ENCODE measurements at regions of chr1 and their contacts with region 1.

Region 1: DNA sequence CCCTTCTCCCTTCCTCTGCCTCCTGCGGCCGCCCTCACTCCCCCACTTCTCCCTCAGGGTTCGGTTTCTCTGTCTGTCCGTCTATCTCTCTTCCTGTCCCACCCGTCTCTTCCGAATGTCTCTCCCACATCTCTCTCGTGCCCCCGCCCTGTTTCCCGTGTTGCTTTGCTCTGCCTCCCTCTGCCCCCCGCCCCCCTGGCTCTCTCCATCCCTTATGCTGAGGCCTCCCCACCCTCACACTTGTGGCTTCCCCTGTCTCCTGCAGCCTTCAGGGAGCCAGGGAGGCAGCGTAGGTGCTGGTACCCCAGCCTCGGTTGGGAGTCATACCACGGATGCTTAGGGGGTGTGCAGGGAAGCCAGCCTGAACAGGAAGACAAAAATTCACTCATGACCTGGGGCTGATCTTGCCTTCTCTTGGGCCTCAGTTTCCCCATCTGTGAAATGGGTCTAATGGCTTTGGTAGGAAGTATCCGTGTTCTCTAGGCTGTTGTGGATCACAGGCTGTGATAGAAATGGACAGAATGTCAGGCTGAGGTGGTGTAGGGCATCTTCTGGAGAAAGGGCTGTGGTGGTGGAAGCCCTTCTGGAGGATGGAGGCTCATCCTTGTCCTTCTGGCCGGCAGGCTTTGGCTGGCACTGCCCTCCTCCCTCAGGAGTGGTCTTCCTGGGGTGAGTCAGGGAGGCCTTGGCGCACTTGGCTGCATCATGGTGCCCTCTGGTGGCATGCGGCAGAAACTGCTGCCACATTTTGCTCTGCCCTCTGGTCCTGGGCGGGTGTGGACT is 55.5 kb downstream of the FOXO6 start:
- DNase-seq: peak; percentile 70 to 76
- ATAC-seq: peak; percentile 69 to 88; a peak in 5 of 6 replicates
- H3K4me3 ChIP-seq: no peak overlapping the region
- H3K27ac ChIP-seq: 0 out of 6 replicates have a peak overlapping the region, but pooled peaks of 1 of the 2 experiments have one; percentile 6
- H3K4me1 ChIP-seq: peaks cover 15% of the 10 kb centered on the region
- CTCF ChIP-seq: peak; percentile 73
- EP300 ChIP-seq: no peak
- POLR2A ChIP-seq: no peak
- RAD21 ChIP-seq: peak; percentile 84 to 91

Region 2: GRCh38 chr1:41255978-41256377 is 160.8 kb before region 1 on chr1:
- CTCF ChIA-PET with region 1: interaction called, 14 read pairs
- POLR2A ChIA-PET with region 1: no interaction called
- DNase-seq: no peak
- ATAC-seq: no peak
- H3K4me3 ChIP-seq: no peak overlapping the region
- H3K27ac ChIP-seq: peak overlapping the region in 1 of 2 experiments; percentile 31; a peak in 1 of 6 replicates
- H3K4me1 ChIP-seq: 0 out of 3 replicates have a peak, but pooled peaks cover 6% of the 10 kb centered on the region
- CTCF ChIP-seq: no peak
- EP300 ChIP-seq: no peak
- POLR2A ChIP-seq: no peak
- RAD21 ChIP-seq: no peak

Region 3: DNA sequence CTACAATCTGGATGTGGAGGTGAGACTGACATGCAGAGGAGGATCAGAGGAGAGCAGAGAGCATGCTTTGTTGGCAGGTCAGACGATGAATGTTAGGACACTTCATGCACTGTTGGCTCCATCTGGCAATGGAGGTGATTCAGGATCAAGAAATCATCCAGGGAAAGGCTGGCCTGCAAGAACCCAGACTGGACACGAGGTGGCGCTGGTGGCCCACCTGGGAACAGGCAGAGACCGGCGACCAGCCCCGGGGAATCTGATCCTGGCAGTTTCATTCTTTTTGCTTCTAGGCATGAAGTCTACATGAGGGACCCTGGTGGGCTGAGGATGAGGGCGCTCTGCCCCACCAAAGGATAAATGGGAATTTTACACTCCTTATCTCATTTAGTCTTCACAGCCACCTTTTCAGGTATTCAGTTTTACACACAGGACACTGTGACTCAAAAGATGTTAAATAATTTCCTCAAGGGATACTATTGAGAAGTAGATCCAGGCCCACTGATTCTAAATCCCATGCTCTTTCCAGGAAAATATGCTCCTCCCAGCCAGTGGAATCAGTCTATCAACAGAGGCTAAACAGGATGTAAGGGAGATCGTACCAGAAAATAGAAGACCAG is 148.5 kb before region 1 on chr1:
- CTCF ChIA-PET with region 1: interaction called, 16 read pairs
- POLR2A ChIA-PET with region 1: no interaction called
- DNase-seq: peak; percentile 64 to 77
- ATAC-seq: peak; percentile 67 to 94
- H3K4me3 ChIP-seq: no peak overlapping the region
- H3K27ac ChIP-seq: peak overlapping the region; percentile 34 to 48; a peak in 2 of 6 replicates
- H3K4me1 ChIP-seq: peaks cover 3% of the 10 kb centered on the region; the same call in 1 of the 3 replicates
- CTCF ChIP-seq: peak; percentile 84
- EP300 ChIP-seq: no peak
- POLR2A ChIP-seq: no peak
- RAD21 ChIP-seq: peak; percentile 90 to 91

Region 4: GRCh38 chr1:41322835-41323627 is 93.7 kb before region 1 on chr1:
- CTCF ChIA-PET with region 1: interaction called, 19 read pairs
- POLR2A ChIA-PET with region 1: no interaction called
- DNase-seq: peak; percentile 47 to 55
- ATAC-seq: peak; percentile 91 to 97
- H3K4me3 ChIP-seq: no peak overlapping the region
- H3K27ac ChIP-seq: no peak overlapping the region
- H3K4me1 ChIP-seq: no peaks in the 10 kb centered on the region
- CTCF ChIP-seq: peak; percentile 38
- EP300 ChIP-seq: no peak
- POLR2A ChIP-seq: no peak
- RAD21 ChIP-seq: peak; percentile 62 to 77

Region 5: DNA sequence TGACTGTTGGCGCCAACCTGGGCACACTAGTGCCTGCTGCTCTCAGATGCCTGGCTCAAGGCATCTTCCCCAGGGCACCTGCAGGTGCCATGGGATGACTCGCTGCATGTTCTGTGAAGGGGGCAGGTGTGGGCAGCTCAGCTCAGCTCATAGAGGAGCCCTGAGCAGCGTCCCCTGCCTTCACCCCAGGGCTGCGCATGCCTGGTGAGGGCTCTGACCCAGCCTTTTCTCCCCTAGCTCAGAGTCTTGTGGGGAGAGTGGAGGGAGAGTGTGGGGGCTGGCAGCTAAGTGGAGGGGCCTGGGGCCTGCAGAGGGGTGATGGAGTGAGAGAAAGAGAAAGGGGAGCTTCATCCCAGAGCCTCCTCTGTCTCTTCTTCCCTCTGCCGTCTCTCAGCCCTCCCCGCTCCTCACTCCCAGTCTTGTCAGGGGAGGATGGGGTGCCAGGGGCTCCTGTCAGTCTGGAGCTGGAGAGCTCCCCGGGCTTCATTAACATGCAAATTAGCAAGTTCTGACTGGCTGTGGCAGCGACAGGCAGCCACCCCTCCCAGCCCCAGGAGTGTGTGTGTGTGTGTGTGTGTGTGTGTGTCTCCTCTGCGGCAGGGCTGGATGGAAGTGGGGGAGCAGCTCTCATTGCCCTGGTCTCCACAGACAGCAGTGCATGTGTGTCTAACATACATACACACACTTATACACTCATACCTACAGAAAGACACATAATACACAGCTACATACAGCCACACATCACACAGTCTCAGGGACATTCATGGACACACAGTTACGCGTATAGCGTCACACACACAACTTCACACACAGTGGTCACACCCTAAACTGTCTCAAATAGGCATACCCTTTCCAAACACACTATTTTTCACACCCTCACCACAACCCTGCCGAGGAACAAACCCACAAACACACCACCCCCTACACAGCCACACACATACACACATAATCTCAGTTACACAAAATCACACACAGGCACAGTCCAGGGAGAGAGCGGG is 21.5 kb before region 1 on chr1:
- CTCF ChIA-PET with region 1: interaction called, 31 read pairs
- POLR2A ChIA-PET with region 1: no interaction called
- DNase-seq: no peak
- ATAC-seq: peak; percentile 62 to 68
- H3K4me3 ChIP-seq: no peak overlapping the region
- H3K27ac ChIP-seq: no peak overlapping the region
- H3K4me1 ChIP-seq: no peaks in the 10 kb centered on the region
- CTCF ChIP-seq: no peak
- EP300 ChIP-seq: no peak
- POLR2A ChIP-seq: no peak
- RAD21 ChIP-seq: no peak